Head of caudate nucleus (tissue), 42 donors: ENCODE measurements at regions of chr14 and their contacts with region 1.

Region 1: GRCh38 chr14:23631702-23632460 is 4.3 kb upstream of the DHRS2 start:
- DNase-seq: peak; percentile 34 to 92 (median 85)

Region 2: GRCh38 chr14:23929822-23930294 is 298.0 kb after region 1 on chr14:
- intact Hi-C with region 1: loop called (anchors 10 kb)
- DNase-seq: peak; percentile 65 to 97 (median 89)